ENCODE measurements at regions of chr22 and their contacts with region 1.

Region 1: DNA sequence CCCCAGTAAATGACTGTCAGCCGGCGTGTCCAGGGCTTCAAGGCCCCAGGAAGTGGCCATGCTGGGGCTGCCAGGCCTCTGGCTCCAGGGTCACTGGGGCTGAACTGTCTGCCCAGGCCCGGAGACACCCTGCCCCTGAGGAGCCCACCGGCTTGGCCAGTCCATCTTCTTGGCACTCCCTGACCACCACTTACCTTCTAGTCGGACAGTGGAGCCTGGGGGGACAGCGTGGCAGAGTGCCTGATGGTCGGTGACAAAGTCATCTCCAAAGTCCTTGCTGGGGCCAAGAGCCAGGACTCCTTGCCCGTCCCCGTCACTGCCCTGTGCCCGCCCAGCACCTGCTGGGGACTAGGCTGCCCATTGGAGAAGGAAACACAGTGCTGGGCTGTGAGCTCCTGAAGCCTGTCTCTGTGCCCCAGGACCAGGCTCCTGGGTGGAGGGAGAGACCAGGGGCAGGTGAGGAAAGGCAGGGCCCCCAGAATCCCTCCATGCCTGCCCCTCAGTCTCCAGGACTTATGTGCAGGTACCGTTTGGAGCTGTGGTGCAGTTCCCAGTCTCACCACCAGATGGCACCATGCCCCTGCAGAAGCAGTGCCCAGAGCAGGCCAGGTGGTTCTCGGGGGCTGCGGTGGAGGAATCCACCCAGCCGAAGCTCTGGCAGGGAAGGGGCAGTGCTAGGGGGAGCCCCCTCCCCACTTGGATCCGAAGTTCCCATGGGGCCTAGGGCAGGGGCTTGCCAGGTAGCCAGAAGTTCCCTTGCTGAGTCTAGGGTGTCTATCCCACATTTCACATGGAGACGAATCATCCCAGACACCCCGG is 6.0 kb upstream of the CCDC188 start:
- DNase-seq: peak; percentile 79 to 98
- H3K4me3 ChIP-seq: no peak overlapping the region
- H3K27ac ChIP-seq: no peak overlapping the region
- H3K4me1 ChIP-seq: peaks cover 0 to 7% (median 4%) of the 10 kb centered on the region in 4 experiments; a peak in 4 of 7 replicates
- H3K27me3 ChIP-seq: no peaks in the 10 kb centered on the region
- CTCF ChIP-seq: peak; percentile 97 to 99 (median 99)
- EP300 ChIP-seq: no peak
- POLR2A ChIP-seq: no peak
- RAD21 ChIP-seq: peak; percentile 100

Region 2: DNA sequence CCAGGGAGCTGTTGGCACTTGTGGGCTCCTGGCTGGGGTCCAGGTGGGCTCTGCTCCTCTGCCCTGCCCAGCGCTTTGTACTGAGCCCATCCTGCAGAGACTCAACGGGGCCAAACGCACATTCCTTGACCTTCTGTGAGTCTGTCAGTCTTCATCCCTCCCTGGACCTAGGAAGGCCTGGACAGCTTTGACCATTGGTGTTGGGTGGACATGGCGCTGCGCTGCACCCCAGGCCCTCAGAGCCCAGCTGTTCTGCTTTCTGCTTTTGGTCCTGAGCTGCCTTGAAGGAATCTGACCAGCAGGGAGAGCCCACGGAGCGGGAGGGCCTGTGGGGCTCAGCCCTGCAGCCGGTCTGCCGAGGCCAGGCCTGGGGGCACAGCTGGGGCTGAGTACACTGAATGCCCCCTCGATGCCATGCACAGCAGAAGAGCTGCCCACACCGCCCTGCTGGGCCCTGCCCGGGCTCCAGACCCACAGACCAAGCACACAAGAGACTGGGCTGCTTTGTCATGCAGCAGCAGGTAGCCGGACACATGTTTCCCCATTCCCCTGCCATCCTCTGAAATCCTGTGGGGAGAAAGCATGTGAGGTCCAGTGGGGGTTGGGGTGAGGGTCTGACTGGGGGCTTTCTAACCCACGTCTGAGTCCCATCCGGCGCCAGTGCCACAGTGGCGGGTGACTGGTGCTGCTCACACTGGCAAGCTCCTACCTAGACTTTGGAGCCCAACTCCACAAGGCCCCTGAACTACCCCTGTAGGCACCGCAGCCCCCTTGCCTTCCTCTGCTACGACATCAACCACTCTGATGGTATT is 18.2 kb after region 1 on chr22:
- CTCF ChIA-PET with region 1: interaction called, 15 read pairs
- POLR2A ChIA-PET with region 1: no interaction called
- DNase-seq: no peak
- H3K4me3 ChIP-seq: no peak overlapping the region
- H3K27ac ChIP-seq: no peak overlapping the region; the same call in 1 of the 2 replicates
- H3K4me1 ChIP-seq: peaks cover 0 to 8% (median 0%) of the 10 kb centered on the region in 4 experiments; a peak in 2 of 7 replicates
- H3K27me3 ChIP-seq: no peaks in the 10 kb centered on the region
- CTCF ChIP-seq: peak; percentile 22 to 39 (median 32); a peak in 3 of 4 replicates
- EP300 ChIP-seq: no peak
- POLR2A ChIP-seq: no peak
- RAD21 ChIP-seq: peak; percentile 29 to 49; a peak in 3 of 4 replicates

Region 3: GRCh38 chr22:20205964-20206708 is 49.3 kb after region 1 on chr22:
- CTCF ChIA-PET with region 1: interaction called, 10 read pairs
- POLR2A ChIA-PET with region 1: no interaction called
- DNase-seq: no peak
- H3K4me3 ChIP-seq: no peak overlapping the region
- H3K27ac ChIP-seq: no peak overlapping the region
- H3K4me1 ChIP-seq: peaks cover 0 to 23% (median 16%) of the 10 kb centered on the region in 4 experiments; a peak in 6 of 7 replicates
- H3K27me3 ChIP-seq: no peaks in the 10 kb centered on the region
- CTCF ChIP-seq: no peak
- EP300 ChIP-seq: no peak
- POLR2A ChIP-seq: no peak
- RAD21 ChIP-seq: no peak

Region 4: GRCh38 chr22:20268279-20269012 is 111.6 kb after region 1 on chr22 and contains the start of gene RTN4R:
- CTCF ChIA-PET with region 1: interaction called, 20 read pairs
- POLR2A ChIA-PET with region 1: no interaction called
- DNase-seq: peak in 1 of 2 experiments; percentile 86
- H3K4me3 ChIP-seq: peak within 1 kb of the TSS; percentile 30 to 64 (median 51)
- H3K27ac ChIP-seq: peak within 1 kb of the TSS; percentile 63; the same call in 1 of the 2 replicates
- H3K4me1 ChIP-seq: peaks cover 0 to 10% (median 7%) of the 10 kb centered on the region in 4 experiments; a peak in 5 of 7 replicates
- H3K27me3 ChIP-seq: no peaks in the 10 kb centered on the region; a peak in 2 of 7 replicates
- CTCF ChIP-seq: peak; percentile 62 to 91 (median 78)
- EP300 ChIP-seq: no peak
- POLR2A ChIP-seq: no peak; a peak in 1 of 3 replicates
- RAD21 ChIP-seq: peak; percentile 65 to 80
- total RNA-seq, gene RTN4R: 21.8 and 22.5 TPM in 2 replicates

Region 5: DNA sequence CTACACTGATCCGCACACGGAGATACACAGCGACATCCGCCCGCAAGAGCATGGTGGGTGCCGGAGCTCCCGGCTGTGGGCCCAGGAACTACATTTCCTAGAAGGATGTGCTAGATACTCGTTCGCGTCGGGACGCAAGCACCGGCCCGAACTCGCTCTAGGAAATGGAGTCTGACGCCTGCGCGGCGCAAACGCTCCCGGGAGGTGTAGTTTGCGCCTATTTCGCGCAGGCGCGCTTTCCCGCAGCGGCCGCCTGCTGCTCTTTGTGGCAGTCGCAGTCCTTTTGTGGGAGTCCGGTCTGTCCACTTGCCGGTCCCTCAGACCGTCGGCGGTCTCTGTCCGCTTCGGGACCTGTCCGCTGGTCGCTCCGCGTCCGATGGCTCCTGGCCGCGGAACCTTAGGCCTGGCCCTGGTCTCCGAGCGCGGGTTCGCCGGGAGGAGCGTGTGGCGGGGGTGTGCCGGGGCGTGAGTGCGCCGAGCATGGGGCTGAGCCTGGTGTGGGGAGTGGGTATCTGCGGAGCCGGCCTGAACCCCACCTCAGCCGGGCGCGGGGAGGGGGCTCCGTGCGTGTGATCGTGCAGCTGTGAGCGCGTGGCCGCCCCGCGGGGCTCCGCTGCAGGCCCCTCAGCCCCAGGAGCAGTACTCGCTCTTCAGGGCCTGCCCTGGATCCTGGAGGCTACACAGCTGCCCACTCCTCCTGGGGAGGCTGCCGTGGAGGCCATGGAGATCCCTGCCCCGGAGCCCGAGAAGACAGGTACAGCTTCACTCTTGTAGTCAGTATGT is 237.3 kb after region 1 on chr22 and contains the start of gene ZNF74:
- CTCF ChIA-PET with region 1: no interaction called
- POLR2A ChIA-PET with region 1: no interaction called
- DNase-seq: peak; percentile 76 to 86
- H3K4me3 ChIP-seq: peak within 1 kb of the TSS; percentile 77 to 97 (median 89)
- H3K27ac ChIP-seq: peak within 1 kb of the TSS; percentile 55; the same call in 1 of the 2 replicates
- H3K4me1 ChIP-seq: peaks cover 0 to 10% (median 8%) of the 10 kb centered on the region in 4 experiments; a peak in 5 of 7 replicates
- H3K27me3 ChIP-seq: no peaks in the 10 kb centered on the region
- CTCF ChIP-seq: no peak
- EP300 ChIP-seq: no peak
- POLR2A ChIP-seq: peak in 1 of 2 experiments; percentile 70; a peak in 2 of 3 replicates
- RAD21 ChIP-seq: peak in 1 of 2 experiments; percentile 5; a peak in 1 of 4 replicates
- total RNA-seq, gene ZNF74: 44.9 and 45.7 TPM in 2 replicates

Measured in H1 (cell line).